Heart left ventricle (tissue), 16 donors: ENCODE measurements at regions of chr10 and their contacts with region 1.

Region 1: DNA sequence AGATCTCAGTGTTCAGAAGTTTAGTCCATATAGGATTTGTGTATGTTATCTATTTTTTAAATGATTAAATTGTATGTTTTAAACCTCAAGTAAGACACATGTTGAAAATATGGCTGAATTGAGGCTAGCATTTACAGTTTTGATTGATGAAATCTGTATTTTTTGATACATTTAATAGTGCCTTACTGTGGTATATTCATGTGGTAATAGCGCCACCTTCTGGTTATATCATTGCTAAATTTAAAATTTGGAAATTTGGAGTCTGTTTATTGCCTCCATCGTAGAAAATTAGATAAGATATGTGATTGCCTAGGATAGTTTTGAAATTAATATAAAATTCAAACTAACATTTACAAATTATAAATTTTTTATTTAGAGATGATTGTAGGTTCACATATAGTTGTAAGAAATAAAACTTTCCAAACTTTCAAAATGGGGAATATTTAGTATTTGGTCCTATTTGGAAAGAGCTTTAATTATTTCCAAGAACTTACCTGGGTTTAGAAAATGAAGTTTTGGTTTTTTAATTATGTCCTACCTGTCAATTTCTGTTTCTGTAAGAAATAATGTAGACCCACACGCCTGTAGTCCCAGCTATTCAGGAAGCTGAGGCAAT is 19.1 kb upstream of the ARMS2 start:
- DNase-seq: no peak
- ATAC-seq: peak in 3 of 4 donors; percentile 41 to 59 (median 46)
- H3K4me3 ChIP-seq: no peak overlapping the region
- H3K27ac ChIP-seq: no peak overlapping the region
- H3K4me1 ChIP-seq: no peaks in the 10 kb centered on the region
- H3K27me3 ChIP-seq: no peaks in the 10 kb centered on the region
- CTCF ChIP-seq: peak; percentile 60 to 85 (median 74)
- POLR2A ChIP-seq: no peak

Region 2: DNA sequence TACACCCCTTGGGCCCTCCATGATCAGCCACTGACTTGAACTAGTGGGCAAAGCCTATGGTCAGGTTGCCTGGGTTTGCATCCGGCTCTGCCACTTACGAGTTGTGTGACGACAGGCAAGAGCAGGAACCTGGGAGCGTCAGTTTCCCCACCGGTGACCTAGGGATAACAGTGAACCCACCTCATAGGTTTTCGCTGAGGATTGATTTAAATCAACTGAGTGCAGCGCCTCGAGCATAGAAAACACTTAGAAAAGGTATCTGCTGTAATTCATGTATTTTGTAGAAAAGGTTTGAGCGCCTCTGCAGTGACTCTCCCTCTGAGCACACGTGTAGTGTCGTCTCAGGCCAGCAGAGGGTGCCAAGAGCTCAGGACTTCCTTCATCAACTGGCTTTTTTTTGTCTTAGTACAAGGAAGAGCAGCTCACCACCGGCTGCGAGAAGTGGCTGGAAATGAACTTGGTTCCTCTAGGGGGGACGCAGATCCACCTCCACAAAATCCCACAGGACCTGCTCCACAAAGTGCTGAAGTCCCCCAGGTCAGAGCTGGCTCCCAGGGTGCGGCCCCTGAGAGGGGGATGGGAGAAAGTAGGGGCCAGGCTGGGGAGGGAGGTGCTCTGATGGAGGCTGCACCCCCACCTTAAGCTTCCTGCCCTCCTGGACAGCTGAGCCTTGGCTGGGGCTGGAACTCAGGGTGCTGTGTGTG is 136.6 kb before region 1 on chr10:
- intact Hi-C with region 1: loop called (anchors 1 to 2 kb)
- DNase-seq: peak; percentile 64 to 73 (median 66)
- ATAC-seq: peak in 3 of 4 donors; percentile 82 to 90 (median 88)
- H3K4me3 ChIP-seq: peak overlapping the region in 7 of 12 donors; percentile 15 to 37 (median 24)
- H3K27ac ChIP-seq: no peak overlapping the region
- H3K4me1 ChIP-seq: peaks cover 0 to 13% (median 0%) of the 10 kb centered on the region in 12 donors
- H3K27me3 ChIP-seq: no peaks in the 10 kb centered on the region
- CTCF ChIP-seq: peak; percentile 78 to 97 (median 92)
- POLR2A ChIP-seq: no peak

Region 3: GRCh38 chr10:122307669-122308486 is 127.4 kb before region 1 on chr10:
- intact Hi-C with region 1: loop called in 1 of 10 experiments (anchors 2 kb)
- DNase-seq: peak; percentile 77 to 88 (median 78)
- ATAC-seq: peak; percentile 89 to 93 (median 91)
- H3K4me3 ChIP-seq: peak overlapping the region in 8 of 12 donors; percentile 2 to 30 (median 14)
- H3K27ac ChIP-seq: peak overlapping the region; percentile 71 to 91 (median 82)
- H3K4me1 ChIP-seq: peaks cover 0 to 37% (median 21%) of the 10 kb centered on the region in 12 donors
- H3K27me3 ChIP-seq: no peaks in the 10 kb centered on the region
- CTCF ChIP-seq: no peak
- POLR2A ChIP-seq: no peak

Region 4: DNA sequence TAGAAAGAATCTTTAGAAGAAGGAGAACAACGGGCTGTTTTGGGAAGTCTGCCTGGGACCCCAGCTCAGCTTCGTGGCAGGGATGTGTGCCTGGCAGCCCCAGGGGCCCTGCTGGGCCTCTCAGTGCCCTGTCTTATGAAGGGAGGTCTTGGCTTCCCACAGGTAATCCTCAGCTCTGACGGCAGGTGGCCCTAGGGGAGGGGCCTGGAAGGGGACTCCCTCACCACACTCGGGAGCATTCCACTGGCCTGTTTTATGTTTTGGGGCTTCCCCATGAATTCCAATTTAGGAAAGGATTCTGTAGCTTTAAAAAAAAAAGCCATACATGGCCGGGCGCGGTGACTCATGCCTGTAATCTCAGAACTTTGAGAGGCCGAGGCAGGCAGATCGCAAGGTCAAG is 122.2 kb after region 1 on chr10:
- intact Hi-C with region 1: loop called in 4 of 10 experiments (anchors 5 to 10 kb)
- DNase-seq: no peak
- ATAC-seq: no peak
- H3K4me3 ChIP-seq: no peak overlapping the region
- H3K27ac ChIP-seq: no peak overlapping the region
- H3K4me1 ChIP-seq: no peaks in the 10 kb centered on the region
- H3K27me3 ChIP-seq: peaks cover 0 to 6% (median 0%) of the 10 kb centered on the region in 9 donors
- CTCF ChIP-seq: no peak
- POLR2A ChIP-seq: no peak